ENCODE measurements at regions of chrX and their contacts with region 1.

Region 1: DNA sequence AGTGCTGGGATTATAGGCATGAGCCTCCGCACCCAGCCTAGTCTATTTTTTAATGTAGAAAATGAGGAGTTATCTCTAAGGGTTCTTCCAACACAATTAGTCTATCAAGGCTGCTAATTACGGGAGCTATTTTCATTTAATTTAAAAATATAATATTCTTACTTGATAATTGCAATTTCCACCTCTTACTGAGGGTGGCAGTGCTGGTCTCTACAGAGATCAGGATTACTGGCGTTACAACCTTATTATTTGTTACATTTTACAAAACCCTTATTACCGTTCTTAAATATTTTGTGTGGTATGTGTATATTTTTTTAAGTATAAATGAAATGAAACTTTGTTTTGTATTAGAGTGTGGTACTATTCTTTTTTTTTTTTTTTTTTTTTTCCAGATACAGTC is 17.6 kb upstream of the GK start:
- DNase-seq: no peak
- ATAC-seq: no peak
- H3K4me3 Mint-ChIP-seq: no peak overlapping the region
- H3K27ac Mint-ChIP-seq: no peak overlapping the region
- H3K4me1 Mint-ChIP-seq: peaks cover 7% of the 10 kb centered on the region
- H3K27me3 Mint-ChIP-seq: no peaks in the 10 kb centered on the region
- CTCF ChIP-seq: no peak

Region 2: DNA sequence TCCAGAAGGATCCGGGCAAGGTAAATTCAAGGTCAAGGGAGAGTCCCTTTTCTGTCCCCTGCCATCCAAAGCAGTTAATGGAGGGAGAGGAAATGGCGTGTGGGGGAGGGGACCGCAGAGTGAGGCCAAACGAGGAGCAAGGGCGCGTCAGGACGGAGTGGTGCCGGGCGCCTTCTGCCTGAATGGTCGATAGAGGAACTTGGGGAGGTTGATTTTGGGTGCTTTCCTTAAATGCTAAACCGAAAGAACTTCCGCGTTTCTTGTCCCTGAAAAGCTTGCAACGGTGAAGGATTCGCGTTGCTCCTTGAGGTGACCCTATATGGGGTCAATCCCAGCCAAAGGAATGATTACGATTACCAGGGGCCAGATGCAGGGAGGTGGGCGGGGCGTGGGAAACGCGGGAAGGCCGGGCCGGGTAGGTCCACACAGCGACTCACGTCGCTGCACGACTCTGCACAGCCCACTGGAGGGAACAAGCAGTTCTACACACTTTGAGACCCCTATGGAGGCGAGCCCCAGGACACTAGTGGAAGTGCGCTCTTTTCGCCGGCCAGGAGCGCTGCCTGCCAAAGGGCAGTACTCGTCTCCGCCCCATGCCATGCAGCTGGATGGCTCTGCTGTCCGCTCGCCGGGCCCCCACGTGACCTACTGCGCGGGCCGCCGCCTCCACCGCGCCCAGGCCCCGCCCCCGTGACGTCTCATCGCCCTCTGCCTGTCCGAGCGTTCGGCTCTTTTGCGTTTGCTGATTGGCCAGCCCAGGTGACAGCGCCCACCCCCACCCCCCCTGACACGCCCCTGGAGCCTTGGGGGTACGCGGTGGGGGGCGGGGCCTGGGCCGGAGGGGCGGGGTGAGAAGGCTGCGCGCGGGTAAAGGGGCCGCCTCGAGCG is 17.1 kb after region 1 on chrX:
- CTCF ChIA-PET with region 1: no interaction called
- POLR2A ChIA-PET with region 1: no interaction called
- intact Hi-C with region 1: no loop called
- DNase-seq: peak; percentile 87
- ATAC-seq: peak; percentile 84
- H3K4me3 Mint-ChIP-seq: peak overlapping the region; percentile 90
- H3K27ac Mint-ChIP-seq: peak overlapping the region; percentile 96
- H3K4me1 Mint-ChIP-seq: peaks cover 49% of the 10 kb centered on the region
- H3K27me3 Mint-ChIP-seq: no peaks in the 10 kb centered on the region
- CTCF ChIP-seq: no peak

Region 3: GRCh38 chrX:30822068-30822681 is 186.5 kb after region 1 on chrX:
- CTCF ChIA-PET with region 1: no interaction called
- POLR2A ChIA-PET with region 1: no interaction called
- intact Hi-C with region 1: loop called (anchors 5 kb)
- DNase-seq: no peak
- ATAC-seq: peak; percentile 89
- H3K4me3 Mint-ChIP-seq: no peak overlapping the region
- H3K27ac Mint-ChIP-seq: peak overlapping the region; percentile 88
- H3K4me1 Mint-ChIP-seq: peaks cover 25% of the 10 kb centered on the region
- H3K27me3 Mint-ChIP-seq: no peaks in the 10 kb centered on the region
- CTCF ChIP-seq: no peak

Measured in activated B cell treated with CpG ODN at 0.5 μM for 24 hours (primary cell).